ENCODE measurements at regions of chr16 and their contacts with region 1.

Region 1: GRCh38 chr16:3027945-3028712 is 4.3 kb downstream of the THOC6 start:
- DNase-seq: peak; percentile 92
- H3K4me3 ChIP-seq: no peak overlapping the region
- H3K27ac ChIP-seq: no peak overlapping the region
- H3K4me1 ChIP-seq: peaks cover 13% of the 10 kb centered on the region
- H3K27me3 ChIP-seq: peaks cover 4% of the 10 kb centered on the region
- CTCF ChIP-seq: peak; percentile 75

Region 2: DNA sequence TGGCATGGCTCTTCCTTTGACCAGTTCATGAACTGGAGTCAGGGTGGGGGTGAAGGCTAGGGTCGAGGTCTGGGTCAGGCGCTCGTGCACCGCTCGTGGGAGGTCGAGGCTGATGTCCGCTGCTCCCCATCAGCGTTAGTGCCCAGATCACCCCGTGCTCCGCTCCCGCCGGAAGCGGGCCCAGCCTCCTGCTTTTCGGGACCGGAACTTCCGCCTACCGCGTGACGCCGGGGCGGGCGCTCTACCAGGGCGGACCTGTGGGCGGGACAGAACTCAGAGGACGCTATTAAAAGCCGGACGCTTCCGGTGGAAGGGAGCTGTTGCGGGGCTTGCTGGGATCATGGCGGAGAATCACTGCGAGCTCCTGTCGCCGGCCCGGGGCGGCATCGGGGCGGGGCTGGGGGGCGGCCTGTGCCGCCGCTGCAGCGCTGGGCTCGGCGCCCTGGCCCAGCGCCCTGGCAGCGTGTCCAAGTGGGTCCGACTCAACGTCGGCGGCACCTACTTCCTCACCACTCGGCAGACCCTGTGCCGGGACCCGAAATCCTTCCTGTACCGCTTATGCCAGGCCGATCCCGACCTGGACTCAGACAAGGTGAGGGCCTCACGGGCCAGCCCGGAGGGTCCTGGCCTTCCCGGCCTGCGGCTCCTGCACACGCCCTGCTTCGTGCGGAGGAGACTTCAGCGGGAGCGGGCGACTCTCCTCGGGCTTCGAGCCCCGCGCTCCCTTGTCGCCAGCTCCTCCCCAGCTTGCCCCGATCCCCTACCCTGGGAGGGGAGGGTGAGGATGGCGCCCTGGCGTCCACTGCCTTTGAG is 345.7 kb before region 1 on chr16 and contains the start of gene KCTD5:
- intact Hi-C with region 1: no loop called
- DNase-seq: peak; percentile 98
- H3K4me3 ChIP-seq: peak within 1 kb of the TSS; percentile 100
- H3K27ac ChIP-seq: peak within 1 kb of the TSS; percentile 88
- H3K4me1 ChIP-seq: peaks cover 2% of the 10 kb centered on the region
- H3K27me3 ChIP-seq: no peaks in the 10 kb centered on the region
- CTCF ChIP-seq: no peak
- total RNA-seq, gene KCTD5: 45.2 to 88.3 TPM

Region 3: GRCh38 chr16:3003582-3004302 is 24.4 kb before region 1 on chr16:
- intact Hi-C with region 1: loop called (anchors 2 kb)
- DNase-seq: peak; percentile 97
- H3K4me3 ChIP-seq: no peak overlapping the region
- H3K27ac ChIP-seq: no peak overlapping the region
- H3K4me1 ChIP-seq: peaks cover 16% of the 10 kb centered on the region
- H3K27me3 ChIP-seq: no peaks in the 10 kb centered on the region
- CTCF ChIP-seq: peak; percentile 54

Measured in colonic mucosa (tissue), 4 donors.